Dorsolateral prefrontal cortex (tissue), 120 donors: ENCODE measurements at regions of chr11 and their contacts with region 1.

Region 1: GRCh38 chr11:33257897-33258630 is 883 bp downstream of the HIPK3 start:
- DNase-seq: peak; percentile 52 to 82 (median 71)
- H3K4me3 ChIP-seq: peak overlapping the region; percentile 59 to 95 (median 86)
- H3K27ac ChIP-seq: peak overlapping the region; percentile 94 to 100 (median 100)
- H3K27me3 ChIP-seq: no peaks in the 10 kb centered on the region
- CTCF ChIP-seq: peak in 48 of 56 donors; percentile 0 to 58 (median 40)

Region 2: DNA sequence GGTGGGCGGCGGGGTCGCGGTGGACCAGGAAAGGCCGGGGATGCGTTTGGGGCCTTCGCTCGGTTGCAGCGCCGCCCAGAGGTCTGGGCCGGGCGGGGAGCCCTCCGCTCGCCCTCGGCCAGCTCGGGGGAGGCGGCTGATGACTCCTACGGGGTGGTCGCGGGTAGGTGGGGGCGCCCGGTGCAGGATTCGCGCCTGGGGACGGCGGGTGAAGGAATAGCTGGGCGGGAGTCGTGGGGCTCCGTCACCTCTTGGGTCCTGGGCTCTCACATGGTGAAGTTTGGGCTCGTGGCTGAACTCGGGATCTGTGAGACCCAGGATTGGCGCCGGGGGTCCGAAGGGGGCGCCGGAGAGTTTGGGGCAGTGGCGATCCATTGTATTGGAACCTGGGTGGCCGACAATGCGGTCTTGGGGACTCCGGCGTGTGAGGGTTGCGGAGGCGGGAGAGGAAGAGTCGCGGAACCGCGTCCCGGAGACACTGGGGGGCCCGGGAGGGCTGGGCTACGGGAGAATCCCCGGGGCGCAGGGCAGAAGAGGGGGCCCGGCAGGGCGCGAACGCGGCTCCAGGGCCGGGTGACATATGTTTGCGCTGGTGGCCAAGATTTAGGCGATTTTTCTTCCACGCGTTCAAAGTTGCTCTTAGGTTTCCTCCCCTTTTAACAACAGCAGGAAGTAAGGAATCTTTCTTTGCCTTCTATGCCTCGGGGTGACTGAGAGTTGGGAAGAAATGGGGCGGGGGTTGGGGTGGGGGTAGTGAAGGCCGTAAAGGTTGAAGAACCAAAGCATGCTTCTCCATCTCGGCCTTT is 364.5 kb before region 1 on chr11:
- intact Hi-C with region 1: loop called in 1 of 2 experiments (anchors 10 kb)
- DNase-seq: peak in 8 of 10 donors; percentile 28 to 72 (median 42)
- H3K4me3 ChIP-seq: peak overlapping the region; percentile 60 to 96 (median 90)
- H3K27ac ChIP-seq: peak overlapping the region in 57 of 59 donors; percentile 32 to 98 (median 88)
- H3K27me3 ChIP-seq: no peaks in the 10 kb centered on the region
- CTCF ChIP-seq: peak in 54 of 56 donors; percentile 17 to 69 (median 50)

Region 3: GRCh38 chr11:33039274-33040032 is 218.6 kb before region 1 on chr11 and contains the start of gene TCP11L1:
- intact Hi-C with region 1: loop called in 1 of 2 experiments (anchors 10 kb)
- DNase-seq: peak; percentile 62 to 96 (median 93)
- H3K4me3 ChIP-seq: peak within 1 kb of the TSS; percentile 50 to 95 (median 87)
- H3K27ac ChIP-seq: peak within 1 kb of the TSS; percentile 85 to 100 (median 98)
- H3K27me3 ChIP-seq: no peaks in the 10 kb centered on the region
- CTCF ChIP-seq: peak in 43 of 56 donors; percentile 4 to 63 (median 35)
- total RNA-seq, gene TCP11L1: 37.5 to 87.1 (median 67.2) TPM

Region 4: GRCh38 chr11:33161120-33162005 is 96.7 kb before region 1 on chr11 and contains the start of gene CSTF3:
- intact Hi-C with region 1: loop called (anchors 2 kb)
- DNase-seq: peak; percentile 100
- H3K4me3 ChIP-seq: peak within 1 kb of the TSS; percentile 63 to 97 (median 86)
- H3K27ac ChIP-seq: peak within 1 kb of the TSS; percentile 41 to 95 (median 87)
- H3K27me3 ChIP-seq: no peaks in the 10 kb centered on the region
- CTCF ChIP-seq: peak in 55 of 56 donors; percentile 19 to 76 (median 58)
- total RNA-seq, gene CSTF3: 20.9 to 50.5 (median 35.5) TPM

Region 5: DNA sequence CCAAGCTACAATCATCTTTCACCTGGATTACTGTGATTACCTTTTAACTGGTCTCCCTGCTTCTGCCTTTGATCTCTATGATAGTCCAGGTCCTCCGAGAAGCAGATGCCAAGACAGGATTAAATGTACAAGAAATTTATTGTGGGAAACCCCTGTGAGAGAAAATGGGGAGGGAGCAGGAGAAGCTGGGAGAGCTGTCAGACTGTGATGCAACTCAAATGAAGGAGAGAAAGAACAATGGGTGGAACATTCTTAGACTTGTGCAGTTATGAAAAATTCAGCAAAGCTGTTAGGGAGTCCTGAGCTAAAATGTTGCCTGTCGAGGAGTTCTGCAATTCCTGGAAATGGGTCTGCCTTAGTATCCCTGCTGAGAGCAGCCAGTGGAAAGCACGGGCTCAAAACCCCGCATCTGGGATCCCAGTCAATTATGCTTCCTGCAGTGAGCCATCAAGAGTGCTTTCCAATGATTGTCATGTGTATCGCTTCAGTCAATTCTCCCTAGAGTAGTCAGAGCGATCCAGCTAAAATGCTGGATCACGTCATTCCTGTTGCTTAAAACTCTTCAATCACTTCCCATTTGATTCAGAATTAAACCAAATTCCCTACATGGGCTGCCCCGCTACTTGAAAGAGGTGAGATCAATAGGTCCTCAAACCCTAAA is 80.3 kb before region 1 on chr11:
- intact Hi-C with region 1: no loop called
- DNase-seq: no peak
- H3K4me3 ChIP-seq: no peak overlapping the region
- H3K27ac ChIP-seq: no peak overlapping the region
- H3K27me3 ChIP-seq: no peaks in the 10 kb centered on the region
- CTCF ChIP-seq: no peak

Region 6: GRCh38 chr11:33187998-33188722 is 69.9 kb before region 1 on chr11:
- intact Hi-C with region 1: no loop called
- DNase-seq: no peak
- H3K4me3 ChIP-seq: no peak overlapping the region
- H3K27ac ChIP-seq: no peak overlapping the region
- H3K27me3 ChIP-seq: no peaks in the 10 kb centered on the region
- CTCF ChIP-seq: no peak

Region 7: GRCh38 chr11:33291004-33291777 is 33.1 kb after region 1 on chr11:
- intact Hi-C with region 1: loop called in 1 of 2 experiments (anchors 5 kb)
- DNase-seq: no peak
- H3K4me3 ChIP-seq: peak overlapping the region in 25 of 59 donors; percentile 0 to 38 (median 11)
- H3K27ac ChIP-seq: peak overlapping the region in 47 of 59 donors; percentile 4 to 77 (median 50)
- H3K27me3 ChIP-seq: no peaks in the 10 kb centered on the region
- CTCF ChIP-seq: no peak

Region 8: DNA sequence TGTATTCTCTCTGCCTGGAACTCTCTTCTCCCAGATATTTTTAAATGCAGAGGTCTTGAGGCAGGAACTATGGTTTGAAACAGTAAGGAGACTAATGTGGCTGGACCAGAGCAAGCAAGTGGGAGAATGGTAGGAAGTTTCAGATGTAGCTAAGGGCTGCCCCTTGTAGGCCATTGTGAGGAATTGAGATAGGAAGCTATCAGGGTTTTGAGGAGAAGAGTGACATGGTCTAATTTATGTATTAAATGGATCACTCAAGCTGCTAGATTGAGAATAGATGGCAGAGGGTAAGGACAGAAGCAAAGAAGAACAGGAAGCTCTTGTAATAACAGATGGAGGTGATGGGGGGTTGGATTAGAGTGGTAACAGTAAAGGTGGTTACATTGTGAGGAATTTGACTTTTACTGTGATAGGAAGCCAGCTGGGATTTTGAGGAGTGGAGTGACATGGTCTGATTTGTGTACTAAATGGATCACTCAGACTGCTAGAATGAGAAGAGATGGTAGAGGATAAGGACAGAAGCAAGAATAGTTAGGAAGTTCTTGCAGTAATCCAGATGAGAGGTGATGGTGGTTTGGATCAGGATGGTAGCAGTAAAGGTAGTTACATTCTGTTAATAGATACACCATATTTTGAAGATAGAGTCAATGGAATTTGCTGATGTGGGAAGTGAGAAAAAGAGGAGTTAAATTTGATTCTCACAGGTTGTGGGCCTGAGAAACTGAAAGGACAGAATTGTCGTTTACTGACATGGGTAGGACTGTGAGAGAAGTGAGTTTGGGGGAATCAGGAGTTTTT is 62.2 kb after region 1 on chr11:
- intact Hi-C with region 1: loop called in 1 of 2 experiments (anchors 2 kb)
- DNase-seq: no peak
- H3K4me3 ChIP-seq: no peak overlapping the region
- H3K27ac ChIP-seq: peak overlapping the region in 28 of 59 donors; percentile 2 to 59 (median 30)
- H3K27me3 ChIP-seq: no peaks in the 10 kb centered on the region
- CTCF ChIP-seq: peak in 11 of 56 donors; percentile 8 to 46 (median 17)

Region 9: GRCh38 chr11:33329705-33330329 is 71.8 kb after region 1 on chr11:
- intact Hi-C with region 1: loop called in 1 of 2 experiments (anchors 5 kb)
- DNase-seq: peak in 5 of 10 donors; percentile 20 to 63 (median 41)
- H3K4me3 ChIP-seq: no peak overlapping the region
- H3K27ac ChIP-seq: peak overlapping the region in 4 of 59 donors; percentile 1 to 15 (median 8)
- H3K27me3 ChIP-seq: no peaks in the 10 kb centered on the region
- CTCF ChIP-seq: peak in 55 of 56 donors; percentile 41 to 82 (median 68)

Region 10: DNA sequence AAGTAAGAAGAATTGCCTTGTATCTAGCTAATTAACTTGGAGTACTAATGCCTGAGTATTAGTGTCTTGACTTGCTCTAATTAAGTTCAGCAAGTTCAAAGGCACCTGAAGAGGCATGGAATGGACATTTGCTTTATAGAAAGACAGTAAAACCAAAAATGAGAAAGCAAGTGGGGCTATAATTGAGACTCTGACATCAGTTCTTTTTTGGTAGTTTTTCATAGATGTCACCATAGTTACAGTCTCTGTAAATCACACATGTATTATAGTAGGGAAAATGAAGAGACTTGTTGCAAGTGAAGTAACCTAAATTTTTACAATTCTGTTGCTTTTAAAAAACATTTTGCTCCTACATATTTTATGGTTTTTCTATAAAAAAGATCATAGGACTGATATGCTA is 177.2 kb after region 1 on chr11:
- intact Hi-C with region 1: no loop called
- DNase-seq: no peak
- H3K4me3 ChIP-seq: no peak overlapping the region
- H3K27ac ChIP-seq: no peak overlapping the region
- H3K27me3 ChIP-seq: no peaks in the 10 kb centered on the region
- CTCF ChIP-seq: no peak